PC-9 (cell line): ENCODE measurements at regions of chr1 and their contacts with region 1.

Region 1: GRCh38 chr1:119422631-119423030 is 7.7 kb downstream of the HSD3B2 start:
- DNase-seq: no peak
- H3K4me3 ChIP-seq: no peak overlapping the region
- H3K27ac ChIP-seq: no peak overlapping the region
- H3K4me1 ChIP-seq: no peaks in the 10 kb centered on the region
- H3K27me3 ChIP-seq: no peaks in the 10 kb centered on the region
- CTCF ChIP-seq: no peak

Region 2: DNA sequence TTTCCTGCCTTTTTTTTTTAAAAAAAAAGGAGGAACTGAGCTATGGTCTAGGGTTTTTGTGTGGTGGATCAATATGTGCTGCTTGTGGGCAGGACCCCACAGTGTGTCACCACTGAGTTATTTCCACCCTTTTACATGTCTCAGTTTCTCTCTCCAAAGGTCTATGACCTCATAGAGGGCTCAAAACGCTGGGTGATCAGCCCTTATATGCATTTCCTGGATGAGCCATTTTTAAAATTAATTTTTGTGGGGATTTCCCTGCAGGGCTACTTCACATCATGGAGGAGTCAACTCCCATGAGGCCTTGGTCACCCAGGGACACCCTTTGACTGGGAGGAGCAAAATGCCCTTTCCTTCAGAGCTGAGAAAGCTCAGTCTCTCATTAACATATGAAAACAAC is 74.8 kb before region 1 on chr1:
- CTCF ChIA-PET with region 1: interaction called, 10 read pairs
- POLR2A ChIA-PET with region 1: no interaction called
- intact Hi-C with region 1: no loop called
- DNase-seq: no peak
- H3K4me3 ChIP-seq: no peak overlapping the region
- H3K27ac ChIP-seq: no peak overlapping the region
- H3K4me1 ChIP-seq: no peaks in the 10 kb centered on the region
- H3K27me3 ChIP-seq: peaks cover under 1% of the 10 kb centered on the region; the same call in 1 of the 2 replicates
- CTCF ChIP-seq: no peak

Region 3: GRCh38 chr1:119440721-119441307 is 18.2 kb after region 1 on chr1:
- CTCF ChIA-PET with region 1: no interaction called
- POLR2A ChIA-PET with region 1: no interaction called
- intact Hi-C with region 1: no loop called
- DNase-seq: no peak
- H3K4me3 ChIP-seq: no peak overlapping the region
- H3K27ac ChIP-seq: no peak overlapping the region
- H3K4me1 ChIP-seq: no peaks in the 10 kb centered on the region
- H3K27me3 ChIP-seq: peaks cover 20% of the 10 kb centered on the region; the same call in 1 of the 2 replicates
- CTCF ChIP-seq: no peak

Region 4: GRCh38 chr1:119711804-119712341 is 289.2 kb after region 1 on chr1 and contains the start of gene PHGDH:
- CTCF ChIA-PET with region 1: no interaction called
- POLR2A ChIA-PET with region 1: no interaction called
- intact Hi-C with region 1: no loop called
- DNase-seq: peak; percentile 78 to 89
- H3K4me3 ChIP-seq: peak within 1 kb of the TSS; percentile 93
- H3K27ac ChIP-seq: peak within 1 kb of the TSS; percentile 85
- H3K4me1 ChIP-seq: peaks cover 34% of the 10 kb centered on the region
- H3K27me3 ChIP-seq: no peaks in the 10 kb centered on the region
- CTCF ChIP-seq: no peak
- total RNA-seq, gene PHGDH: 373 and 569 TPM in 2 replicates